ENCODE measurements at regions of chr11 and their contacts with region 1.

Region 1: DNA sequence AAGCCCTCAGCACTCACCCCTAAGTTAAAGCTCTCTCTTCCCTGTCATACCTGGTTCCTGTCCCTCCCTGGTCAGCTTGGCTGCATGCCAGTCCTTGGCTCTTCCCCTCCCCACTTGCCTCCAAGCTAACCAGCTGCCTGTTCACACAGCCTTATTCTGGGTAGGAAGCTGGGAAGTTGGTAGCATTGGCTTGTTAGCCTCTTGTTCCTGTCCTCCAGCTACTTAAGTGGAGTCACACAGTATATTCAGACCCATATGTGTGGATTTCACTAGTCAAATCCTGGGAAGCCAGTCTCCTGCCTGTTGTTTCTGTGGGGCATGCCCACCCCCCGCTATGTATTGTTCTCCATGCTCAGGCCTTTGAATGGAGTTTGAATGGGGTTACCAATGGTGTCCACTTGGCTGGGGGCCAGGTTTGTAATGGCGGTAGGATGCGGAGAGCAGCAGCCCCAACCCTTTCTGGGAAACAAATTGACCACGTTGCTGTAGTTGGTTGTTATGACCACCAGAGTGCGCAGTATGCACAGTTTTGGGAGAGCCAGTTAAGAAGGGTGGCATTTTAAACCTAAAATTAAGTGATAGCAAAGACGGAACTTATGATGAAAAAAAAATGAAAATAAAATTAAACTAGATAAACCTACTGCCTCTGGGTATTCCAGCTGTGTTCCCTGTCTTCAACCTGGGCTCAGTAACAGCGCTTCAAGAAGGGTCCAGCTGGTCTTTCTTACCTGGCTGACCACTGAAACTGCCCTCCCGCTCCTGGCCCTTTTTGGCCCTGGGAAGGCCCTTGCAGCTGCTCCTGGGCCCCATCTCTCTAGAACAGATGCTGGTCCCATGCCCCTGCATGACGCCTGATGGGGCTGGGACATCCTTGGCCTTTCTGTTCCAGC is 10.7 kb upstream of the RPS3 start:
- DNase-seq: peak; percentile 54
- H3K4me3 ChIP-seq: no peak overlapping the region
- H3K27ac ChIP-seq: peak overlapping the region; percentile 15
- H3K4me1 ChIP-seq: peaks cover 11% of the 10 kb centered on the region
- H3K27me3 ChIP-seq: no peaks in the 10 kb centered on the region
- CTCF ChIP-seq: peak; percentile 86

Region 2: DNA sequence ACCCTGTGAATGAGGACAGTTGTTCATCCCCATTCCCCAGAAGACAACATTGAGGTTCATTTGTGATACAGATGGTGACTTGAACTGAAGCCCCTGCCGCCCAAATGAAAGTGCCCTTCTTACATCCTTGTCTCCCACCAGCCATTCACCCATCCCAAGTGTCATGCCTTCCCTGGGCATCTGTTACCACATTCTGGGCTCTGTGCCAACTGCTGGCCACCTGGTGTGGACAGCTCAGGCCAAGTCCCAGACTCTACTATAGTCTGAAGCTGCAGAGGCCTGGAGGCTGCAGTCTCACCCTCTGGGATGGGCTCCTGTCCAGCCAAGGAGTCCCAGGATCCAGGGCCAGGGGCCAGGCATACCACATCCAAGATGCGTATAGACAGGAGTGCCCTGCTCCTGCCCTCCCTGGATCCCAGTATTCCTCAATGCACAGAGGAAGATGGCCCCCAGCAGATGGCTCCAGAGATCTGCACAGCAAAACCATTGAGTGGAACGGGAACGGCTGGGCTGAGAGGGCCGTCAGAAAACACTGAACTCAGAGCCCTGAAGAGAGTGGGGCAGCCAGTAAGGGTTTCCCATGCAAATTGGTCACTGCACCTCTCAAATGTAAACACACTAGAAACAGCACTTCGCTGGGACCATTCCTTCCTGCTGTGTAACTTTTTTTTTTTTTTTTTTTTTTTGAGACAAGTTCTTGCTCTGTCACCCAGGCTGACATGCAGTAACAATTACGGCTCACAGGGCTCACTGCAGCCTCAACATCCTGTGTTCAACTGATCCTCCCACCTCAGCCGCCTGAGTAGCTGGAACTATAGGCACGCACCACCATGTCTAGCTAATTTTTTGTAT is 60.0 kb before region 1 on chr11:
- intact Hi-C with region 1: loop called (anchors 5 kb)
- DNase-seq: peak; percentile 70
- H3K4me3 ChIP-seq: no peak overlapping the region
- H3K27ac ChIP-seq: peak overlapping the region; percentile 38
- H3K4me1 ChIP-seq: peaks cover 61% of the 10 kb centered on the region
- H3K27me3 ChIP-seq: no peaks in the 10 kb centered on the region
- CTCF ChIP-seq: peak; percentile 80

Measured in left ventricle myocardium inferior (tissue), 1 donor.